Dorsolateral prefrontal cortex (tissue), 120 donors: ENCODE measurements at regions of chr16 and their contacts with region 1.

Region 1: DNA sequence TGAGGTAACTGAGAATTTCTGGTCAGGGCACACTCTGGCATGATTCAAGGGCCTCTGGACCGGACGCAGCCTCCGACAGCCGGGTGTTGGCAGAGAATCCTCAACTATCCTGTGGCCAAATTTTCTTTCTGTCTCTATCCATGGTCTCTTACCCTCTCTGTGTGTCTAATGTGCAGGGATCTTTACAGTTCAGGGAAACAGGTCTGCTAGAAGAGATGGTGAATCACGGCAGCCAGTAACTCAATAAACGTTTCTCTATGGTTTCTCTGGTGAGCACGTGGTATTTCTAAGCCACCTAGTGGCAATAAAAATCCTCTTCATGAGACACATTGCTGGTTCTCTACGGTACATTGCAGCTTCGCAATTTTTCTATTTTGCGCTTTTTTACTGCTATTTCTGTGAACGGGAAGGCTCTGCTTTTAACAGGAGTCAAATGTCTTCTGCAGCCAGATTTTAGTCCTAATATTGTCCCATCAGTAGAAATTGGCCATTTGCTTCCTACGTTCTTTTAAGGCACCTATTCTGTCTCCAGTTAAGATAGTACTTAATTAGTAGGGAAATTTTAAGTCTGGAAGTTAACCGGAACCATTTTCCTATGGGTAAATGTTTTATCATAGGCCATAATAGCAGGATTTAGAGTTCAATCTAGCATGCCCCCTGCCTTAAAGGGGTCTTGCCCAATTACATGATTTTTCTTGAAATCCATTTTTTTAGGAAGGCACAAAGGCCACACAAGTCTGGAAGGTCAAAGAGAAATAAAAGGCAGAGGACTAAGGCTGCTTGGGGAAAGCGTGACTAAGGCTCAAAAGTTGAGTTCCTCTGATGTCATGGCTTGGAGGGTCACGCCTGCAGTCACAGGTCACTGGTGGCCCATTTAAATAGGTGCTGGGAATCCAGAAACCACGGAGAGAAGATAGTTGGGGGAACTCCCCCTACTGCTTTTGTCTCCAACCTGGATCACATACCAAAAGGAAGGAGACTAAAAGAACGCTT is 31.5 kb downstream of the QPRT start:
- DNase-seq: peak in 2 of 10 donors; percentile 11 to 49
- H3K4me3 ChIP-seq: peak overlapping the region in 47 of 59 donors; percentile 3 to 53 (median 31)
- H3K27ac ChIP-seq: peak overlapping the region in 2 of 59 donors; percentile 29 to 67
- H3K27me3 ChIP-seq: no peaks in the 10 kb centered on the region
- CTCF ChIP-seq: peak; percentile 56 to 90 (median 76)

Region 2: GRCh38 chr16:29645694-29646187 is 64.8 kb before region 1 on chr16:
- intact Hi-C with region 1: loop called in 1 of 2 experiments (anchors 10 kb)
- DNase-seq: no peak
- H3K4me3 ChIP-seq: no peak overlapping the region
- H3K27ac ChIP-seq: peak overlapping the region in 1 of 59 donors; percentile 7
- H3K27me3 ChIP-seq: no peaks in the 10 kb centered on the region
- CTCF ChIP-seq: no peak

Region 3: GRCh38 chr16:29675811-29676643 is 34.5 kb before region 1 on chr16:
- intact Hi-C with region 1: no loop called
- DNase-seq: peak in 1 of 10 donors; percentile 29
- H3K4me3 ChIP-seq: no peak overlapping the region
- H3K27ac ChIP-seq: peak overlapping the region in 13 of 59 donors; percentile 5 to 73 (median 30)
- H3K27me3 ChIP-seq: no peaks in the 10 kb centered on the region
- CTCF ChIP-seq: no peak

Region 4: DNA sequence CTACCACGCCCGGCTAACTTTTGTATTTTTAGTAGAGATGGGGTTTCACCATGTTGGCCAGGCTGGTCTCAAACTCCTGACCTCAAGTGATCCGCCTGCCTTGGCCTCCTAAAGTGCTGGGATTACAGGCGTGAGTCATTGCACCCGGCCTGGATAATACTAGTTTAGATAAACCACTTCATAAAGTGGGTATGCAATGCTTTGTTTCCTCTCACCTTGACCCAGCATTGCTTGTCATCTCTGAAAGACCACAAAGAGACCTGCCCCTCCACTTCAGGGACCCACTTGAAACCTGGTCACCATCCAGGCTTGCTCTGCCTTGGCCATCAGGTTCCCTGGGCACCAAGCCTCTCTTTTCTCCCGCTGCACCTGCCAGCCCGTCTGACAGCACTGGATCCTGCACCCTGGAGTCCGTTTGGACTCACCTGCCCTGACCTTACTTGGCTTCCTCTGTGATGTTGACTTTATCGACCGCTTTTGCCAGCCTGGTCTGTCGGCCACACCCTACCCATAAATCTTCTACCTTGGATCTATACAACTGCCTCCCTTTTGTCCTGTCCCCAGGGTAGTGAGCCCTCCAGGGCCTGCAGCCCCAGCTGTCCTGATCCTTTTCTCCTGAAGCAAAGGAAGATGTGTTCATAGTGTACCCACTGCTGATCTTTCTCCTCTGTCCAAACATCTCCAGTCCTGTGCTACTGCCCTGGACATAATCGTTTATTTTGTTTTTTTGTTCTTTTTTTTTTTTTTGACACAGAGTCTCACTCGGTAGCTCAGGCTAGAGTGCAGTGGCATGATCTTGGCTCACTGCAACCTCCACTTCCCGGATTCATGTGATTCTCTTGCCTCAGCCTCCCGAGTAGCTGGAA is 54.9 kb after region 1 on chr16:
- intact Hi-C with region 1: no loop called
- DNase-seq: no peak
- H3K4me3 ChIP-seq: no peak overlapping the region
- H3K27ac ChIP-seq: no peak overlapping the region
- H3K27me3 ChIP-seq: no peaks in the 10 kb centered on the region
- CTCF ChIP-seq: no peak

Region 5: GRCh38 chr16:29790183-29790952 is 79.8 kb after region 1 on chr16 and contains the start of gene KIF22:
- intact Hi-C with region 1: loop called in 1 of 2 experiments (anchors 5 kb)
- DNase-seq: peak; percentile 98 to 100 (median 99)
- H3K4me3 ChIP-seq: peak within 1 kb of the TSS; percentile 66 to 100 (median 94)
- H3K27ac ChIP-seq: peak within 1 kb of the TSS; percentile 63 to 99 (median 93)
- H3K27me3 ChIP-seq: no peaks in the 10 kb centered on the region
- CTCF ChIP-seq: peak; percentile 49 to 89 (median 80)
- total RNA-seq, gene KIF22: 10.5 to 31.6 (median 21.6) TPM

Region 6: DNA sequence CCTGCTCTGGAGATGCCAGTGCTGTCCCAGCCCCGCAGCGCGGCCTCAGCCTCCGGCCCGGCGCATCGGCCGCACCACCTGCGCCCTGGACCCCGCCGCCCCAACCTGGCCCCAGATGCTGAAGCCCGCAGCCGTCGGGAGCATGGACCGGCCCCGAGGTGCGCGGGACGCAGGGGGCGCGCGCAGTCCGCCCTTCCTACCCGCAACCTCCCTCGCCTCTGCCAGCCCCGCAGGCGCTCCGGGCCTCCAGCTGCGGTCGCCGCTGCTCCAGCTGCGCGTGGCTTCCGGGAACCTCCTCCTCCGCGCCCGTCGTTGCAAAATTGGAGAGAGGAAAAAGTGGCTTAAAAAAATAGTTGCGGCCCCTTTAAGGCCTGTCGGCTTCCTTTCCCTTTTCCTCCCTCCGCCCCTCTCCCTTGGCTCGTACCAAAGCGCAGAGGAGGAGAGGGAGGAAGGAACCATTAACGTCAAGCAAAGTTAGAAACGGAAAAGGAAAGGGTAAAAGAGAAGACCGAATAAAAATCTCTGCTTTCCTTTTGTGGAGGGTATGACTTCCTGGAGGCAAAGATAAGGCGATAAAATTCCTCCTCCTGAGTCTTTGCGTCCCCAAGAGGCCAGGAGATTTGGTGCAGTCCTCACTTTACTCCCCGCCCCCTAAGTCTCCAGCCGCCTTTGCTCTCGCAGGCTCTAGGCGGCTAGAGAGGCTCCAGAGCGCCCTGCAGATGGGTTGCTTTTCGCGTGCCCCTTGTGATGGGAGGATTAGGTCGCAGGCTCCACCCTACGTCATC is 152.6 kb after region 1 on chr16 and contains the start of gene CDIPT:
- intact Hi-C with region 1: no loop called
- DNase-seq: peak; percentile 83 to 97 (median 96)
- H3K4me3 ChIP-seq: peak within 1 kb of the TSS; percentile 64 to 100 (median 95)
- H3K27ac ChIP-seq: peak within 1 kb of the TSS; percentile 89 to 99 (median 97)
- H3K27me3 ChIP-seq: no peaks in the 10 kb centered on the region
- CTCF ChIP-seq: peak in 54 of 56 donors; percentile 29 to 84 (median 70)
- total RNA-seq, gene CDIPT: 63.9 to 118 (median 94.7) TPM